ENCODE measurements at regions of chr1 and their contacts with region 1.

Region 1: DNA sequence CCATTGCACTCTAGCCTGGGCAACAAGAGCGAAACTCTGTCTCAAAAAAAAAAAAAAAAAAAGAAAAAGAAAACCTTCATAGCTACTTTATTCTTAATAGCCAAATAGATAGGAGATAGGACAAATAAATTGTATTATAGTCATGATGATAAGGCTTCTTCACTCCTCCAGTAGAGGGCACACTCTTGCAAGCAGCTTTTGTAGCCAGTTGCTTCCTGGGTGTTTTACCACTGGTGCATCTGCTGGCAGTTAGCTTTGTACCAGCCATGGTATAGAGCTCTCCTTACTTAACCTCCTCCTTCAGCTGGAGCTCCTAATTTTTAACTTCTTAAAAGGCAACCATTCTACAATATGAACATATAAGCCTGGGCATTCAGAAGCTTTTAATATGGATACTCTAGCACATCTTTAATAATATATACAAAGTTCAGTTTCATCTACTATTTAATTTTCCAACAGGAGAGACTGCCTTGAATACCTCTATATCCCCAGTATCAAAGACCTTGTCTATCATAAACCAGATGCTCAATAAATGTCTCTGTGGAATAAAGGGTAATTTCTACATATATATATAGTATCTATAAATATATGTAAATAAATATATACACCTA is 35.8 kb downstream of the EVI5 start:
- DNase-seq: peak; percentile 36 to 70
- ATAC-seq: peak; percentile 66 to 85; a peak in 5 of 6 replicates
- H3K4me3 ChIP-seq: no peak overlapping the region
- H3K27ac ChIP-seq: no peak overlapping the region
- H3K4me1 ChIP-seq: no peaks in the 10 kb centered on the region
- CTCF ChIP-seq: peak; percentile 52
- EP300 ChIP-seq: no peak
- POLR2A ChIP-seq: no peak
- RAD21 ChIP-seq: peak; percentile 37 to 69; a peak in 4 of 5 replicates

Region 2: GRCh38 chr1:92430030-92430429 is 319.1 kb before region 1 on chr1:
- CTCF ChIA-PET with region 1: no interaction called
- POLR2A ChIA-PET with region 1: no interaction called
- DNase-seq: no peak
- ATAC-seq: no peak
- H3K4me3 ChIP-seq: no peak overlapping the region
- H3K27ac ChIP-seq: no peak overlapping the region
- H3K4me1 ChIP-seq: no peaks in the 10 kb centered on the region
- CTCF ChIP-seq: no peak
- EP300 ChIP-seq: no peak
- POLR2A ChIP-seq: no peak
- RAD21 ChIP-seq: no peak

Region 3: DNA sequence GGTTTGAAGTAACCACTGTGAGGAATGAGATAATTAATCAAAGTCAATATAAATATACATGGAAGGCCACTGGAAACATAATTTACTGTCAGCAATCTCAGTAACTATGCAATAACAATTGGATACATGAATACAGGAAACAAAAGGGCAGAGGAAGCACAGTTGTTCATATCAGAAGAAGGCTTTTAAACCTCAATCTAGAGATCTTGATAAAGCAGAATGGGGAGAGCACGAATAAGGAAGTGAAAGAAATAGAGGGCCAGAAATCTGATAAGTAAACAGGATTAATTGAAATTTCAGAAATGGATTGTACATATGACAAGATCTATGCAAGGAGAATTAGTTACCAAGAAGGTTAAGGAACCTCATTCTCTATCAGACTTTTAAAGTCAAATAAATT is 57.2 kb before region 1 on chr1:
- CTCF ChIA-PET with region 1: no interaction called
- POLR2A ChIA-PET with region 1: no interaction called
- DNase-seq: no peak
- ATAC-seq: no peak
- H3K4me3 ChIP-seq: no peak overlapping the region
- H3K27ac ChIP-seq: no peak overlapping the region
- H3K4me1 ChIP-seq: no peaks in the 10 kb centered on the region
- CTCF ChIP-seq: no peak
- EP300 ChIP-seq: no peak
- POLR2A ChIP-seq: no peak
- RAD21 ChIP-seq: no peak

Region 4: DNA sequence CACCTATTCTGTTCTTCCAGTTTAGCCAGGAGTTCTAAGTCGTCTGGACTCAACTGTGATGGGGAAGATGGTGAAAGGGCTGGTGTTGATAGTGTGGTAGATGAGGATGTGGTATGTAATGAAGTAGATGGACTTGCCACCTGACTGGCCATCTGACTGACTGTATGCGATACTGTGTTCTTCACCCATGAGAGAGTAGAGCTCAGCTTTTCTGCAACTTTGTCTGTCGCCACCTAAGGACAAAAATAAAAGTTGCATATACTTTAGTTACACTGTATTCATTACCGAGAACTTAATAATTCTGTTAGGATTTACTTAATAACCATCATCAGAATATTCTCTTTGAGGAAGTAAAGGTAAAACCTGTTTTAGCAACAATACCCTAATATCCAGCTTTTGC is 12.7 kb before region 1 on chr1:
- CTCF ChIA-PET with region 1: interaction called, 10 read pairs
- POLR2A ChIA-PET with region 1: no interaction called
- DNase-seq: peak in 1 of 2 experiments; percentile 41
- ATAC-seq: peak; percentile 71 to 75
- H3K4me3 ChIP-seq: no peak overlapping the region
- H3K27ac ChIP-seq: no peak overlapping the region
- H3K4me1 ChIP-seq: no peaks in the 10 kb centered on the region
- CTCF ChIP-seq: peak; percentile 33; the same call in 2 of the 3 replicates
- EP300 ChIP-seq: no peak
- POLR2A ChIP-seq: no peak
- RAD21 ChIP-seq: no peak; a peak in 1 of 5 replicates

Region 5: GRCh38 chr1:92817986-92818764 is 69.0 kb after region 1 on chr1:
- CTCF ChIA-PET with region 1: interaction called, 13 read pairs
- POLR2A ChIA-PET with region 1: no interaction called
- DNase-seq: peak; percentile 23 to 46
- ATAC-seq: peak; percentile 54 to 67; a peak in 4 of 6 replicates
- H3K4me3 ChIP-seq: no peak overlapping the region
- H3K27ac ChIP-seq: no peak overlapping the region
- H3K4me1 ChIP-seq: no peaks in the 10 kb centered on the region
- CTCF ChIP-seq: peak; percentile 29; the same call in 2 of the 3 replicates
- EP300 ChIP-seq: no peak
- POLR2A ChIP-seq: no peak
- RAD21 ChIP-seq: peak; percentile 22 to 44; a peak in 3 of 5 replicates

Region 6: GRCh38 chr1:92877792-92878191 is 128.7 kb after region 1 on chr1:
- CTCF ChIA-PET with region 1: no interaction called
- POLR2A ChIA-PET with region 1: no interaction called
- DNase-seq: no peak
- ATAC-seq: no peak
- H3K4me3 ChIP-seq: no peak overlapping the region
- H3K27ac ChIP-seq: no peak overlapping the region
- H3K4me1 ChIP-seq: 0 out of 3 replicates have a peak, but pooled peaks cover 5% of the 10 kb centered on the region
- CTCF ChIP-seq: no peak
- EP300 ChIP-seq: no peak
- POLR2A ChIP-seq: no peak
- RAD21 ChIP-seq: no peak

Measured in A549 (cell line).